HepG2 (cell line): ENCODE measurements at regions of chrX and their contacts with region 1.

Region 1: GRCh38 chrX:149938427-149939270 is at the start of gene EOLA2:
- DNase-seq: peak; percentile 94
- ATAC-seq: peak; percentile 82
- H3K4me3 ChIP-seq: peak within 1 kb of the TSS; percentile 69 to 88 (median 82); a peak in 5 of 6 replicates
- H3K27ac ChIP-seq: peak within 1 kb of the TSS; percentile 86
- H3K4me1 ChIP-seq: no peaks in the 10 kb centered on the region; the same call in 1 of the 2 replicates
- H3K27me3 ChIP-seq: no peaks in the 10 kb centered on the region; a peak in 1 of 5 replicates
- CTCF ChIP-seq: peak; percentile 86
- EP300 ChIP-seq: no peak
- POLR2A ChIP-seq: peak in 1 of 2 experiments; percentile 71; a peak in 2 of 4 replicates
- RAD21 ChIP-seq: no peak
- total RNA-seq, gene EOLA2: 22.0 and 29.0 TPM in 2 replicates

Region 2: DNA sequence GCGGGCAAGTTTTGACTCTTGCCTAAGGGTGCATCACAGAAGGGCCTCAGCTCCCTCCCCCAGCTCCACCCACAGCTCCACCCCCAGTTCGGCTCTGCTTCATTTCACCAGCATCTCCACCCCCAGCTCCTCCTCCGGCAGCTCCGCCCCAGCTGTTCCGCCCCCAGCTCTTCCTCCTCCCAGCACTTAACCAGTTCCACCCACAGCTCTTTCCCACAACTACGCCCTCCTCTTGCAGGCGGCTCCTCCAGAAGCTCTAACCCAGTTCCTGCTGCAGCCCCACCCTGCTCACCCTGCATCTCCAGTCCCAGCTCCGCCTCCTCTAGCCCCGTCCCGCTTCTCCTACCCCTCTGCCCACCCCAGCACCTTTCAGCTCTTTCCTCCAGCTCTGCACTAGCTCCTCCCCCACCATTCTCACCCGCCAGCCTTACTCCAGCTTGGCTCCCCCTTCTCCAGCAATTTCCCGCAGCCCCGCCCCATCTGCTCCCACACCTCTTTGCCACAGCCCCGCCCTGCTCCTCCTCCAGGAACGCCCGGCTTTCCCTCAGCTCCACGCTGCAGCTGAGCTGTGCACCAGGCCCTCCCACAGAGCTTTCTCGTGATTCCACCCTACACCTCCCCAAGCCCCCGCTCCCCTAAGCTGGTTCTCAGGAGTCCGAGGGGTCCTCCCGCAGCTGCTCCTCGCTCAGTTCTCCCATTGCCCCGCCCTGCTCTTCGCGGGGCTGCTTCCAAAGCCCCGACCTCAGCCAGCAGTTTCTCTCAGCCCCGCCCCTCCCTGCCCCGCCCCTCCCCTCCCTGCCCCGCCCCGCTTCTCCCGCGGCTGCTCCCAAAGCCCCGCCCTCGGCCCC is 399.1 kb before region 1 on chrX:
- CTCF ChIA-PET with region 1: no interaction called
- POLR2A ChIA-PET with region 1: interaction called, 16 read pairs
- in situ Hi-C with region 1: no loop called
- intact Hi-C with region 1: no loop called
- DNase-seq: peak; percentile 81
- ATAC-seq: peak; percentile 66
- H3K4me3 ChIP-seq: peak overlapping the region; percentile 45 to 66 (median 63)
- H3K27ac ChIP-seq: peak overlapping the region; percentile 57
- H3K4me1 ChIP-seq: no peaks in the 10 kb centered on the region
- H3K27me3 ChIP-seq: no peaks in the 10 kb centered on the region
- CTCF ChIP-seq: no peak
- EP300 ChIP-seq: no peak
- POLR2A ChIP-seq: no peak
- RAD21 ChIP-seq: no peak

Region 3: GRCh38 chrX:149871940-149872339 is 66.7 kb before region 1 on chrX:
- CTCF ChIA-PET with region 1: no interaction called
- POLR2A ChIA-PET with region 1: no interaction called
- in situ Hi-C with region 1: no loop called
- intact Hi-C with region 1: no loop called
- DNase-seq: peak; percentile 10
- ATAC-seq: peak; percentile 96
- H3K4me3 ChIP-seq: no peak overlapping the region
- H3K27ac ChIP-seq: no peak overlapping the region
- H3K4me1 ChIP-seq: no peaks in the 10 kb centered on the region
- H3K27me3 ChIP-seq: no peaks in the 10 kb centered on the region
- CTCF ChIP-seq: peak; percentile 74
- EP300 ChIP-seq: no peak
- POLR2A ChIP-seq: no peak
- RAD21 ChIP-seq: no peak

Region 4: GRCh38 chrX:150568320-150569154 is 629.9 kb after region 1 on chrX and contains the start of gene MTM1:
- CTCF ChIA-PET with region 1: no interaction called
- POLR2A ChIA-PET with region 1: interaction called, 13 read pairs
- in situ Hi-C with region 1: no loop called
- intact Hi-C with region 1: no loop called
- DNase-seq: peak; percentile 91
- ATAC-seq: peak; percentile 78
- H3K4me3 ChIP-seq: peak within 1 kb of the TSS; percentile 76 to 93 (median 77)
- H3K27ac ChIP-seq: peak within 1 kb of the TSS; percentile 89
- H3K4me1 ChIP-seq: peaks cover 45% of the 10 kb centered on the region
- H3K27me3 ChIP-seq: no peaks in the 10 kb centered on the region; a peak in 1 of 5 replicates
- CTCF ChIP-seq: no peak
- EP300 ChIP-seq: no peak
- POLR2A ChIP-seq: peak; percentile 48 to 59; a peak in 3 of 4 replicates
- RAD21 ChIP-seq: no peak
- total RNA-seq, gene MTM1: 15.2 and 27.2 TPM in 2 replicates